CD8-positive, alpha-beta T cell (primary cell): ENCODE measurements at regions of chr2 and their contacts with region 1.

Region 1: GRCh38 chr2:148509288-148509902 is 135.2 kb upstream of the EPC2 start:
- DNase-seq: peak; percentile 70 to 88 (median 84)
- ATAC-seq: peak; percentile 100
- H3K4me3 ChIP-seq: peak overlapping the region; percentile 16 to 31
- H3K4me3 Mint-ChIP-seq: peak overlapping the region; percentile 55
- H3K27ac ChIP-seq: no peak overlapping the region
- H3K27ac Mint-ChIP-seq: peak overlapping the region; percentile 41
- H3K4me1 ChIP-seq: peaks cover 10% of the 10 kb centered on the region
- H3K4me1 Mint-ChIP-seq: peaks cover 9% of the 10 kb centered on the region
- H3K27me3 ChIP-seq: no peaks in the 10 kb centered on the region
- H3K27me3 Mint-ChIP-seq: no peaks in the 10 kb centered on the region
- CTCF ChIP-seq: peak; percentile 86

Region 2: GRCh38 chr2:147937744-147938349 is 571.5 kb before region 1 on chr2:
- CTCF ChIA-PET with region 1: interaction called, 14 read pairs
- POLR2A ChIA-PET with region 1: no interaction called
- intact Hi-C with region 1: loop called (anchors 1 kb)
- DNase-seq: peak in 2 of 9 experiments; percentile 36 to 52
- ATAC-seq: peak; percentile 40
- H3K4me3 ChIP-seq: no peak overlapping the region
- H3K4me3 Mint-ChIP-seq: no peak overlapping the region
- H3K27ac ChIP-seq: no peak overlapping the region
- H3K27ac Mint-ChIP-seq: peak overlapping the region; percentile 32
- H3K4me1 ChIP-seq: no peaks in the 10 kb centered on the region
- H3K4me1 Mint-ChIP-seq: no peaks in the 10 kb centered on the region
- H3K27me3 ChIP-seq: no peaks in the 10 kb centered on the region
- H3K27me3 Mint-ChIP-seq: no peaks in the 10 kb centered on the region
- CTCF ChIP-seq: peak; percentile 97

Region 3: GRCh38 chr2:148020111-148021058 is 489.0 kb before region 1 on chr2 and contains the start of gene ORC4:
- CTCF ChIA-PET with region 1: interaction called, 8 read pairs
- POLR2A ChIA-PET with region 1: interaction called, 4 read pairs
- intact Hi-C with region 1: loop called in 1 of 2 experiments (anchors 1 kb)
- DNase-seq: peak; percentile 91 to 100 (median 96)
- ATAC-seq: peak; percentile 86
- H3K4me3 ChIP-seq: peak within 1 kb of the TSS; percentile 96 to 97
- H3K4me3 Mint-ChIP-seq: peak within 1 kb of the TSS; percentile 100
- H3K27ac ChIP-seq: peak within 1 kb of the TSS; percentile 85 to 94
- H3K27ac Mint-ChIP-seq: peak within 1 kb of the TSS; percentile 98
- H3K4me1 ChIP-seq: peaks cover 47% of the 10 kb centered on the region
- H3K4me1 Mint-ChIP-seq: peaks cover 73% of the 10 kb centered on the region
- H3K27me3 ChIP-seq: no peaks in the 10 kb centered on the region
- H3K27me3 Mint-ChIP-seq: no peaks in the 10 kb centered on the region
- CTCF ChIP-seq: no peak
- total RNA-seq, gene ORC4: 28.5 to 29.9 TPM

Region 4: DNA sequence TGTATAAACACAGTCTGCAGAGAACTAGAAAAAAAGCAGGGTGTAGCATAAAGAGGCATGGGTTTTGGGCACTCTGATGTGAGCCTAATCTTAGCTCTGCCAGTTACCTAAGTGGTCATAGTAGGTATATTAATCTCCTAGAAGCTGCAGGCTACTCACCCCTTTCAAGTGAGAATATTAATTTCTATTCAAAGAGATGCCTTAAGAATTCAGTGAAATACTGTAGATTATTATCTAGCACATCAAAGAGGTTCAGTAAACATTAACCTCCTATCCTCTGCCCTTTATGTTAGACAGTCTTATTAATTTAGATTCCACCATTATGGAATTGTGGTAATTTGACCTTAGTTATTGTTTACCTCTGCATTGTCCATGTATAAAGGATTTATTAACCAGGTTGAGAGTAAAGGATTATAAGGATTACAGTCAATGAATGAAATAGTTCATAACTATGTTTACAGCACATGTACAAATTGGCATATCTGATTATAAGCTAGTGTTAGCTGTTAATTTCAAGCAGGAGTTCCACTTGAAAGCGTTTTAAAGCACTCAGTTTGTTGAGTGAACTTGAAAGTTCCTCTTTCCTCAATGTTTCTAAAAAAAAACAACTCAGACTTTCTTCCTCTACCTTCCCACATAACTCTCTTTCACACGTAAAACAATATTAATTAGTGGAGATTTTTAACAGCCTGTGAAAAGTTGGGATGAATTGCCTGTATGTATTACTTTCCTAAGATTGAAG is 15.4 kb before region 1 on chr2:
- CTCF ChIA-PET with region 1: interaction called, 13 read pairs
- POLR2A ChIA-PET with region 1: interaction called, 3 read pairs
- intact Hi-C with region 1: no loop called
- DNase-seq: no peak
- ATAC-seq: no peak
- H3K4me3 ChIP-seq: no peak overlapping the region
- H3K4me3 Mint-ChIP-seq: no peak overlapping the region
- H3K27ac ChIP-seq: no peak overlapping the region
- H3K27ac Mint-ChIP-seq: no peak overlapping the region
- H3K4me1 ChIP-seq: no peaks in the 10 kb centered on the region
- H3K4me1 Mint-ChIP-seq: peaks cover 7% of the 10 kb centered on the region
- H3K27me3 ChIP-seq: no peaks in the 10 kb centered on the region
- H3K27me3 Mint-ChIP-seq: no peaks in the 10 kb centered on the region
- CTCF ChIP-seq: no peak

Region 5: GRCh38 chr2:148552675-148553331 is 43.4 kb after region 1 on chr2:
- CTCF ChIA-PET with region 1: interaction called, 8 read pairs
- POLR2A ChIA-PET with region 1: no interaction called
- intact Hi-C with region 1: loop called in 1 of 2 experiments (anchors 1 kb)
- DNase-seq: peak in 4 of 9 experiments; percentile 41 to 72 (median 52)
- ATAC-seq: peak; percentile 85
- H3K4me3 ChIP-seq: peak overlapping the region; percentile 43 to 65
- H3K4me3 Mint-ChIP-seq: no peak overlapping the region
- H3K27ac ChIP-seq: peak overlapping the region; percentile 44 to 79
- H3K27ac Mint-ChIP-seq: no peak overlapping the region
- H3K4me1 ChIP-seq: peaks cover 17% of the 10 kb centered on the region
- H3K4me1 Mint-ChIP-seq: no peaks in the 10 kb centered on the region
- H3K27me3 ChIP-seq: no peaks in the 10 kb centered on the region
- H3K27me3 Mint-ChIP-seq: no peaks in the 10 kb centered on the region
- CTCF ChIP-seq: no peak

Region 6: DNA sequence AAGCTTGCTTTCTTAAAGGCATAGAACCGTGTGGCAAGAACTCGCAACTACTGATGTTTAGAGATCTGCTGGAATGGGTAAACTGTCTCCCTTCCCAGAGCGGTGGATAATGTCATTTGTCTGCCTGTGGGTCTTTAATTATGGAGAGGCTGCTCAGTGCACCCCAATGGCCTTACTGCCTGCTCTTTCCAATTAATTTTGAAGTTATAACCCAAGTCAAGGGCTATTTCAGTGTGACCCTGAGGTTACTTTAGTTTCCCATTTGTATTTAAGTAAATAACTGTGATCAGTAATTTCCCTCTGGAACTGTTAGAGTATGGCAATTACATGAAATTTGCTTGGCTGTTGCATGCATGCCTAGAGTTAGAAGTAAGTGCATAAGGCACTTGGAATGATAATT is 772.0 kb after region 1 on chr2:
- CTCF ChIA-PET with region 1: no interaction called
- POLR2A ChIA-PET with region 1: no interaction called
- intact Hi-C with region 1: no loop called
- DNase-seq: no peak
- ATAC-seq: no peak
- H3K4me3 ChIP-seq: no peak overlapping the region
- H3K4me3 Mint-ChIP-seq: no peak overlapping the region
- H3K27ac ChIP-seq: no peak overlapping the region
- H3K27ac Mint-ChIP-seq: no peak overlapping the region
- H3K4me1 ChIP-seq: no peaks in the 10 kb centered on the region
- H3K4me1 Mint-ChIP-seq: no peaks in the 10 kb centered on the region
- H3K27me3 ChIP-seq: no peaks in the 10 kb centered on the region
- H3K27me3 Mint-ChIP-seq: no peaks in the 10 kb centered on the region
- CTCF ChIP-seq: no peak